SK-N-SH (cell line): ENCODE measurements at regions of chr10 and their contacts with region 1.

Region 1: DNA sequence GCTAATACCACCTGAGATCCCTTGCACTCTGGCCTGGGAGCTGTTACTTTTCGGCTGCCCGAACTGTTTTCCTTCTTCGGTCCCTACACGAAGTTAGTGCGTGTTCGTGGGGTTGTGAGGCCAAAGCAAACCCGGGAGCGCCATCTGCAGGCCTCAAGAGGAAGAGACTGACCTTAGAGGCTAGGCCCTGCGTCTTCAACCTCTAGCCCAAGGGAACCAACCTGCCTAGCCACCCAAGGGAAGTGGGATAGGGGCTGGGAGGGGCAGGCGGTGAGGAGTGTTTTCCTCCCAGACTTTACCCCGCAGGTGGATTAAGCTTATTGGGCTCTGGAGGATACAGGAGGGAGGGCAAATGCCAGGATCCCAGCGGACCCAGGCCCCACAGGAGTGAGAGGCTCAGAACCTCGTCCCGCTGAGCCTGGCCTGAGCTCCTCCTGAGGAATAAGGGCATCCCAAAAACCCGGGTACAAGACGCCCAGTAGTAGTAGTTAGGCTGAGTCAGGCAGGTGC is 1.7 kb upstream of the PAX2 start:
- DNase-seq: peak; percentile 85
- H3K4me3 ChIP-seq: no peak overlapping the region; a peak in 2 of 4 replicates
- H3K27ac ChIP-seq: no peak overlapping the region
- H3K4me1 ChIP-seq: peaks cover 0 to 21% of the 10 kb centered on the region in 2 experiments; a peak in 1 of 4 replicates
- H3K27me3 ChIP-seq: peaks cover 98% of the 10 kb centered on the region
- CTCF ChIP-seq: peak; percentile 73
- EP300 ChIP-seq: no peak
- RAD21 ChIP-seq: peak; percentile 87

Region 2: GRCh38 chr10:100562008-100562711 is 181.5 kb before region 1 on chr10:
- CTCF ChIA-PET with region 1: interaction called, 262 read pairs
- POLR2A ChIA-PET with region 1: interaction called, 6 read pairs
- DNase-seq: peak; percentile 94
- H3K4me3 ChIP-seq: no peak overlapping the region; a peak in 1 of 4 replicates
- H3K27ac ChIP-seq: no peak overlapping the region
- H3K4me1 ChIP-seq: no peaks in the 10 kb centered on the region; a peak in 1 of 4 replicates
- H3K27me3 ChIP-seq: no peaks in the 10 kb centered on the region
- CTCF ChIP-seq: peak; percentile 67
- EP300 ChIP-seq: no peak
- RAD21 ChIP-seq: peak; percentile 97

Region 3: DNA sequence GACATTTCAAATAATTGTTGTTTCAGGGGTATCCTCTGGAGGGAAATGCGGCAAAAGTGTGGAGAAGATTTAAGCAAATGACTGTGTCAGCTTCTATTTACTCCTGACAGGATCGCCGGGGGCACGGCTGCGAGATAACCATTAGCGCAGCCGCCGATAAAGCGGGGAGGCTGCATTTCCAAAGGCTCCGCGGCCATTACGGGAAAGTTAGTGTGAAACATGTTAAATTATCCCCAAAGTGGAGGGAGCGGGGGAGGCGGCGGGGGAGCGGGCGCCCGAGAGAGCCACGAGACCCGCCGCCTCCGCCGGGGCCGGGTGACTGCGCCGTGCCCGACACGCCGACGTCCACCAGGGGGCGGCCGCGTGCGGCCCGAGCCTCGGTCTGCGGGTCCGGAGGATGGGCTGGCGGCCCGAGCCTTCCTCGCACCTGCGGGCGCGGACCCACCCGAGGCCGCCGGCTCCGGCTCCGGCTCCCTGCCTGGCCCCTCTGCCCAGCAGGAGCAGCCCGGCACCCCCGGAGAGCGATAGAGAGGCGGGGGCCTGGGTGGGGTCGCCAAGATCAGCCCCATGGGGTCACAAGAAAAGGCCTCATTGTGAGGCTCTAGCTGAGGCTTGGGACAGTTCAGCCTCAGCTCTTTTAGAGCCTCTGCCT is 72.7 kb before region 1 on chr10:
- CTCF ChIA-PET with region 1: interaction called, 60 read pairs
- POLR2A ChIA-PET with region 1: no interaction called
- DNase-seq: peak; percentile 92
- H3K4me3 ChIP-seq: peak overlapping the region; percentile 6 to 51; a peak in 1 of 4 replicates
- H3K27ac ChIP-seq: no peak overlapping the region
- H3K4me1 ChIP-seq: no peaks in the 10 kb centered on the region; a peak in 1 of 4 replicates
- H3K27me3 ChIP-seq: peaks cover 30% of the 10 kb centered on the region
- CTCF ChIP-seq: peak; percentile 70
- EP300 ChIP-seq: no peak
- RAD21 ChIP-seq: peak; percentile 54

Region 4: DNA sequence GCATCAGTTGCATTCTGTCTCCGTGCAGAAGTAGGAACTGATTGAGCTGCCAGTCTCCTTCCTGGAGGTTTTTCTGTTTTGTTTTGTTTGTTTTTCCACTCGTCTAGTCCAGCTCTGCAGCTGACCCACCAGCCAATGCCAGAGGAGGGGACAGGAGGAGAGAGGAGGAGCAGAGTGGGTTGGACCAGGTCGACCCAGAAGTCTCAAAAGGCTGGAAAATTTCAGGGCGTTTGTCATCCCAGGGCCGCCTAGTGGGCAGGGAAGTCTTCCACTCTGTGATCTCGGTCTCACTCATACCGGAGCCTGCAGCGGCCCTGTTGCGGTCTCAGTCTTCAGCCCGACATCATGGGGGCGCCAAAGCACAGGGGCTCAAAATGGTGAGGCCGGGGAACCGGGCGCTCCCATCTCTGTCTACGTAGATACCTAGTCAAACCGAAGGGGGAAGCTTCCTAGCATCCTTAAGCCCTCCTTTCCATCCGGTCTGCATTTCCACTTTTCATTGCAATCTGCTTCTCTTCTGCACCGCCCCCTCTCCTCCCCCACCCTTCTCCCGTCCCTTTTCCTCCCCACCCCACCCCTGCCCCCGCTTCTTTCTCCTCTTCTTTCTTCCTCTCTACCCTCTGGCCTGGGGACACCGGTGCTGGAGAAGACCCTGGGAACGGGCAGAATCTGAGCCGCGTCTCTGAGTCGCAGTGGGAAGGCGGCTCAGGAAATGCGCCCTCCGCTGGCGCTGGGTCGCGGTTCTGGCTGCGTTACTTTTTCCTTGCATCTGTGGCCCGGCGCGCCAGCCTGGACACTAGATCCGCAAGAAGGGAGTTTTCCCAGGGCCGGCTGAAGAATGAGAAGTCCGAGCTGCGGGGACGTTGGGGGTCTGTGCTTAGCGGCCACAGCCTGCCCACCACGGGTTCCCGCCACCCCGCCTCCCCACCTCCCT is 14.5 kb before region 1 on chr10:
- CTCF ChIA-PET with region 1: interaction called, 72 read pairs
- POLR2A ChIA-PET with region 1: no interaction called
- DNase-seq: peak; percentile 83
- H3K4me3 ChIP-seq: no peak overlapping the region; a peak in 1 of 4 replicates
- H3K27ac ChIP-seq: no peak overlapping the region
- H3K4me1 ChIP-seq: peaks cover 0 to 11% of the 10 kb centered on the region in 2 experiments; a peak in 1 of 4 replicates
- H3K27me3 ChIP-seq: peaks cover 91% of the 10 kb centered on the region
- CTCF ChIP-seq: peak; percentile 40
- EP300 ChIP-seq: no peak
- RAD21 ChIP-seq: peak; percentile 64

Region 5: DNA sequence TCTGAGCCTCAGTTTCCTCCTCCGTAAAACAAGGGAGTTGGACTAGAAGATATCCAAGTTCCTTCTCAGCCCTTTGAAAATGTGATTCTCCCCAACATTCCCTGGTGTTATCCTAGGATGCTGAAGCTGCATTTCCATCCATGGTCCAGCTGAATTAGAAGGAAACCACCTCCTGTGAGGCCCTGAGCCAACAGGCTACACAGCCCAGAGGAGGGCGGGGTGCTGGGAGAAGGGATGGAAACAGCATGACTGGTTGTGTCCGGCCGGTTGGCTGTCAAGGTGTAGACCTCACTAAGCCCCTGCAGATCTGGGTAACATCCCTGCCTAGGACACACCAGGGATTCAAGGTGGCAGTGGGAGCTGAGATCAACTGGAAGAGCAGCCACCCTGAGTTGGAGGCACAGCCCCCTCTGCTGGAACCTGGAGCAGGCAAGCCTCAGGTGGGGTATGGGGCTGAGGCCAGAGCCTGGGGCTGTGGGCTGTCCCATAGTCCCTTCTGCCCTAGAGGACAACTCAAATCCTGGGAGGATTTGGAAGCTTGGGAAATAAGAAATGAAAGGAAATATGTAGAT is 73.7 kb after region 1 on chr10:
- CTCF ChIA-PET with region 1: interaction called, 79 read pairs
- POLR2A ChIA-PET with region 1: no interaction called
- DNase-seq: no peak
- H3K4me3 ChIP-seq: no peak overlapping the region
- H3K27ac ChIP-seq: no peak overlapping the region
- H3K4me1 ChIP-seq: peaks cover 0 to 4% of the 10 kb centered on the region in 2 experiments; a peak in 1 of 4 replicates
- H3K27me3 ChIP-seq: peaks cover 37% of the 10 kb centered on the region
- CTCF ChIP-seq: no peak
- EP300 ChIP-seq: no peak
- RAD21 ChIP-seq: peak; percentile 59

Region 6: GRCh38 chr10:100878291-100878910 is 134.7 kb after region 1 on chr10:
- CTCF ChIA-PET with region 1: interaction called, 267 read pairs
- POLR2A ChIA-PET with region 1: no interaction called
- DNase-seq: peak; percentile 80
- H3K4me3 ChIP-seq: no peak overlapping the region
- H3K27ac ChIP-seq: no peak overlapping the region
- H3K4me1 ChIP-seq: peaks cover 0 to 30% of the 10 kb centered on the region in 2 experiments; a peak in 2 of 4 replicates
- H3K27me3 ChIP-seq: no peaks in the 10 kb centered on the region
- CTCF ChIP-seq: peak; percentile 79
- EP300 ChIP-seq: no peak
- RAD21 ChIP-seq: peak; percentile 96